ENCODE measurements at regions of chr1 and their contacts with region 1.

Region 1: GRCh38 chr1:187067160-187067559 is 238.4 kb downstream of the PLA2G4A start:
- H3K4me3 ChIP-seq: no peak overlapping the region
- H3K27ac ChIP-seq: no peak overlapping the region
- H3K4me1 ChIP-seq: no peaks in the 10 kb centered on the region
- CTCF ChIP-seq: no peak

Region 2: DNA sequence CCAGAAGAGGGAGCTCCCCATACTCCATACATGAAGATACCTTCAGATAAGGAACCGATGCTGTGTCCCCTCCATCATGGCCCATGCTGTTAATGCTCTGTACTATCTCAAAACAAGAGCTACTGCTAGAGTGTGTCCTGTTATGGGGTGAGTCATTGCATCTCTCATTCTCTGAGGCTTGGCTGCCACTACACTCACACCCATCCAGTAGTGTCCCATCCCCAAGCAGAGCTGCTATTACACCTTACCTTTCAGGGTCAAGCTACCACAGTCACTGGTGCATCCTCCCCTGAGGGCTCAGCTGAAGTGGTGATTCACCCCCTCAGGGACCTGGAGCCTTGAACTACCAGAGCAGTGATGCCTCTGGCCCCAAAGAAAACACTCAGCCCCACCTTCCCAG is 39.9 kb before region 1 on chr1:
- CTCF ChIA-PET with region 1: no interaction called
- POLR2A ChIA-PET with region 1: no interaction called
- H3K4me3 ChIP-seq: no peak overlapping the region
- H3K27ac ChIP-seq: no peak overlapping the region
- H3K4me1 ChIP-seq: no peaks in the 10 kb centered on the region
- CTCF ChIP-seq: no peak

Region 3: GRCh38 chr1:187051618-187052232 is 15.4 kb before region 1 on chr1:
- CTCF ChIA-PET with region 1: interaction called, 13 read pairs
- POLR2A ChIA-PET with region 1: no interaction called
- H3K4me3 ChIP-seq: no peak overlapping the region
- H3K27ac ChIP-seq: no peak overlapping the region
- H3K4me1 ChIP-seq: no peaks in the 10 kb centered on the region
- CTCF ChIP-seq: no peak